ENCODE measurements at regions of chr11 and their contacts with region 1.

Region 1: DNA sequence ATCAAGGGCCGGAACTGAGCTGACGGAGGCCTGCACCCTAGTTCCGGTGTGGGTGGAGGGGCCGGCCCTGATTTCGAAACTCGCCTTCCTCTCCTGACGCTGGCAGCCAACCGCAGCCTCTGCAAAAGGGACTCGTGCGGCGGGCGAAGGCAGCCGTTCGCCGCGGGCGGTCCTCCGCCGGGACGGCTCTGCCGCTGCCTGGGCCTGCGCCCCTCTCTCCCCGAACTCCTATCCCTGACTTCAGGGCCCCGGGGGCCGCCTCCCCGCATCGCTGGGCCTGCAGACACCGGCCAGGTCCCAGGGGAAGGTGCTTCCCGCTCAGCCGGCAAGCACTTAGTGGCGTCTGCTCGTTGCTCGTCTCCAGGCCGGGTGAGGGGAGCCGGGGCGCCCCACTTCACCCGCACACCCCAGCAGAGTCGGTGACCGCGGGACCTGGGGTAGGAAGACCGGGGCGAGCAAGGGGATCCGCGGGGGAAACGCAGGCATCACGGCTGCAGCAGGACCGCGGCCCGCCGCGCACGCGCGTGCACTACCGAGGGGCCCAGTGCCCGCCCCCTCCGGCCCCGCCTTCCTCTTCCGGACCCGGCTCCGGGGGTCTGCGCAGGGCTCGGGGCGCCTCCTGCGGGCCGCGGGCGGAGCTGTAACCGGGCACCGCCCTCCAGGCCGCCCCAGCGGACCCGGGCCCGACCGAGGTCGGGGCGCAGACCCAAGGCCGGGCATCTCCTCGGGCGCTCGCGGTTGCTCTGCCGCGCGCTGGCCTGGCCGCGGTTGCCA is 464 bp upstream of the ANKRD13D start:
- DNase-seq: peak; percentile 79 to 95 (median 89)
- ATAC-seq: peak; percentile 63
- H3K4me3 ChIP-seq: peak overlapping the region; percentile 91
- H3K4me3 Mint-ChIP-seq: peak overlapping the region; percentile 83
- H3K27ac ChIP-seq: peak overlapping the region; percentile 90 to 95
- H3K27ac Mint-ChIP-seq: peak overlapping the region; percentile 90
- H3K4me1 ChIP-seq: peaks cover 86% of the 10 kb centered on the region
- H3K4me1 Mint-ChIP-seq: peaks cover 49% of the 10 kb centered on the region
- H3K27me3 ChIP-seq: no peaks in the 10 kb centered on the region
- H3K27me3 Mint-ChIP-seq: no peaks in the 10 kb centered on the region
- CTCF ChIP-seq: peak; percentile 48

Region 2: DNA sequence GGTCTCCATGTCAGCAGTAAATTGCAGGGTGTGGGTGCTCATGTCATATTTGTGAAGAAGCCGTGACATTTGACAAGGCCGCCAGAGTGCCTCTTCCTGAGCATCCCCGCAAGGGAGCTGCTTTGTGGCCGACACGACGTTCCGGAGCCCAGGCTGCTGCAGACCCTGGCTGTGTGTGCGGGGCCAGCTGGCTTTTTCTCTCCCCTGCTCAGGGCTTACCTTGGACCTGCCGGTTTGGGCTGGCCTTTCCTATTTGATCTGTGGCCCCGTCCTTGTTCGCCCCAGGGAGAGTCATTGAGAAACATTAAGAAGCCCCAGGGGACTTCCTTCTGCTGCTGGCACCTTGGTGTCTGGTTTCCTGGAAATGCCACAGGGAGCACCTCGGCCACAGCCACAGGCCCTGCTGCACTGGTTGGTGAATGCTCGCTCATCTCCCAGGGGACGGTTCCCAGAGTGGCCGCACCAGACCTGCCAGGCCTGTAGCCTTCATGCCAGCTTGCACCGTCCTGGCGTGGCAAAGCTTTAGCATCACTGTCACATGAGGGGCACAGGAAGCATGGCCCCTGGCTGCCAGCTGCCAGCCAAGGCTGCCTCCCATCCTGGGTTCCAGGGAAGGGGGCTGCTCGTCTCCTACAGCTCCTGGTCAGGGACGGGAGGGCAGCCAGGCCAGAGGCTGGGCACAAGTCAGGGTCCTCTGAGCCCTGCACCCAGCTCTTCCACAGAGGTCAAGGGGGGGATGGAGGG is 16.9 kb before region 1 on chr11:
- CTCF ChIA-PET with region 1: interaction called, 26 read pairs
- POLR2A ChIA-PET with region 1: interaction called, 191 read pairs
- intact Hi-C with region 1: loop called (anchors 1 kb)
- DNase-seq: peak in 8 of 14 experiments; percentile 36 to 85 (median 62)
- ATAC-seq: peak; percentile 35
- H3K4me3 ChIP-seq: peak overlapping the region; percentile 96
- H3K4me3 Mint-ChIP-seq: peak overlapping the region; percentile 98
- H3K27ac ChIP-seq: peak overlapping the region; percentile 35 to 90
- H3K27ac Mint-ChIP-seq: peak overlapping the region; percentile 90
- H3K4me1 ChIP-seq: peaks cover 92% of the 10 kb centered on the region
- H3K4me1 Mint-ChIP-seq: peaks cover 85% of the 10 kb centered on the region
- H3K27me3 ChIP-seq: no peaks in the 10 kb centered on the region
- H3K27me3 Mint-ChIP-seq: no peaks in the 10 kb centered on the region
- CTCF ChIP-seq: no peak

Region 3: GRCh38 chr11:67277231-67277961 is 11.2 kb before region 1 on chr11:
- CTCF ChIA-PET with region 1: interaction called, 26 read pairs
- POLR2A ChIA-PET with region 1: interaction called, 191 read pairs
- intact Hi-C with region 1: loop called (anchors 1 kb)
- DNase-seq: peak; percentile 81 to 98 (median 93)
- ATAC-seq: peak; percentile 93
- H3K4me3 ChIP-seq: peak overlapping the region; percentile 43
- H3K4me3 Mint-ChIP-seq: peak overlapping the region; percentile 91
- H3K27ac ChIP-seq: peak overlapping the region; percentile 76 to 97
- H3K27ac Mint-ChIP-seq: peak overlapping the region; percentile 90
- H3K4me1 ChIP-seq: peaks cover 100% of the 10 kb centered on the region
- H3K4me1 Mint-ChIP-seq: peaks cover 64% of the 10 kb centered on the region
- H3K27me3 ChIP-seq: no peaks in the 10 kb centered on the region
- H3K27me3 Mint-ChIP-seq: no peaks in the 10 kb centered on the region
- CTCF ChIP-seq: no peak

Region 4: GRCh38 chr11:67303132-67303834 is 14.6 kb after region 1 on chr11 and contains the start of gene SSH3:
- CTCF ChIA-PET with region 1: interaction called, 3 read pairs
- POLR2A ChIA-PET with region 1: interaction called, 54 read pairs
- intact Hi-C with region 1: no loop called
- DNase-seq: peak in 8 of 14 experiments; percentile 30 to 66 (median 48)
- ATAC-seq: peak; percentile 62
- H3K4me3 ChIP-seq: peak within 1 kb of the TSS; percentile 62
- H3K4me3 Mint-ChIP-seq: peak within 1 kb of the TSS; percentile 65
- H3K27ac ChIP-seq: peak within 1 kb of the TSS in 1 of 2 donors; percentile 41
- H3K27ac Mint-ChIP-seq: no peak within 1 kb of the TSS
- H3K4me1 ChIP-seq: peaks cover 33% of the 10 kb centered on the region
- H3K4me1 Mint-ChIP-seq: peaks cover 5% of the 10 kb centered on the region
- H3K27me3 ChIP-seq: no peaks in the 10 kb centered on the region
- H3K27me3 Mint-ChIP-seq: no peaks in the 10 kb centered on the region
- CTCF ChIP-seq: no peak
- total RNA-seq, gene SSH3: 8.5 to 8.8 TPM